ENCODE measurements at regions of chr9 and their contacts with region 1.

Region 1: GRCh38 chr9:121121582-121122087 is 46.9 kb downstream of the CNTRL start:
- DNase-seq: peak; percentile 87
- ATAC-seq: peak; percentile 100
- H3K4me3 ChIP-seq: peak overlapping the region; percentile 59
- H3K27ac ChIP-seq: peak overlapping the region; percentile 80
- H3K4me1 ChIP-seq: peaks cover 7% of the 10 kb centered on the region; the same call in 1 of the 2 replicates
- H3K27me3 ChIP-seq: no peaks in the 10 kb centered on the region
- CTCF ChIP-seq: peak in 1 of 3 experiments; percentile 15; a peak in 1 of 6 replicates
- EP300 ChIP-seq: no peak
- POLR2A ChIP-seq: peak; percentile 76
- RAD21 ChIP-seq: no peak; the same call in 1 of the 2 replicates

Region 2: GRCh38 chr9:121074635-121075385 is 46.8 kb before region 1 on chr9 and contains the start of gene CNTRL:
- CTCF ChIA-PET with region 1: interaction called, 5 read pairs
- POLR2A ChIA-PET with region 1: interaction called, 22 read pairs
- RAD21 ChIA-PET with region 1: interaction called, 18 read pairs
- SMC1A ChIA-PET with region 1: interaction called, 66 read pairs
- in situ Hi-C with region 1: no loop called
- intact Hi-C with region 1: loop called (anchors 5 kb)
- DNase-seq: peak; percentile 62
- ATAC-seq: peak; percentile 84
- H3K4me3 ChIP-seq: peak within 1 kb of the TSS; percentile 91
- H3K27ac ChIP-seq: peak within 1 kb of the TSS; percentile 98
- H3K4me1 ChIP-seq: peaks cover 29% of the 10 kb centered on the region
- H3K27me3 ChIP-seq: no peaks in the 10 kb centered on the region
- CTCF ChIP-seq: no peak
- EP300 ChIP-seq: no peak
- POLR2A ChIP-seq: peak; percentile 93
- RAD21 ChIP-seq: no peak
- polyA plus RNA-seq, gene CNTRL: 20.0 to 22.0 TPM

Region 3: GRCh38 chr9:121082075-121082474 is 39.6 kb before region 1 on chr9:
- CTCF ChIA-PET with region 1: interaction called, 4 read pairs
- POLR2A ChIA-PET with region 1: interaction called, 21 read pairs
- RAD21 ChIA-PET with region 1: interaction called, 18 read pairs
- SMC1A ChIA-PET with region 1: interaction called, 66 read pairs
- in situ Hi-C with region 1: no loop called
- intact Hi-C with region 1: no loop called
- DNase-seq: no peak
- ATAC-seq: peak; percentile 54
- H3K4me3 ChIP-seq: no peak overlapping the region
- H3K27ac ChIP-seq: no peak overlapping the region; the same call in 1 of the 2 replicates
- H3K4me1 ChIP-seq: no peaks in the 10 kb centered on the region
- H3K27me3 ChIP-seq: no peaks in the 10 kb centered on the region
- CTCF ChIP-seq: no peak
- EP300 ChIP-seq: no peak
- POLR2A ChIP-seq: no peak
- RAD21 ChIP-seq: no peak

Region 4: GRCh38 chr9:121107041-121107440 is 14.6 kb before region 1 on chr9:
- CTCF ChIA-PET with region 1: interaction called, 12 read pairs
- POLR2A ChIA-PET with region 1: interaction called, 16 read pairs
- RAD21 ChIA-PET with region 1: interaction called, 7 read pairs
- SMC1A ChIA-PET with region 1: interaction called, 21 read pairs
- in situ Hi-C with region 1: no loop called
- intact Hi-C with region 1: no loop called
- DNase-seq: no peak
- ATAC-seq: peak; percentile 79
- H3K4me3 ChIP-seq: no peak overlapping the region
- H3K27ac ChIP-seq: no peak overlapping the region
- H3K4me1 ChIP-seq: no peaks in the 10 kb centered on the region
- H3K27me3 ChIP-seq: no peaks in the 10 kb centered on the region
- CTCF ChIP-seq: peak in 2 of 3 experiments; percentile 16 to 30; a peak in 2 of 6 replicates
- EP300 ChIP-seq: no peak
- POLR2A ChIP-seq: no peak
- RAD21 ChIP-seq: peak; percentile 38; the same call in 1 of the 2 replicates

Region 5: DNA sequence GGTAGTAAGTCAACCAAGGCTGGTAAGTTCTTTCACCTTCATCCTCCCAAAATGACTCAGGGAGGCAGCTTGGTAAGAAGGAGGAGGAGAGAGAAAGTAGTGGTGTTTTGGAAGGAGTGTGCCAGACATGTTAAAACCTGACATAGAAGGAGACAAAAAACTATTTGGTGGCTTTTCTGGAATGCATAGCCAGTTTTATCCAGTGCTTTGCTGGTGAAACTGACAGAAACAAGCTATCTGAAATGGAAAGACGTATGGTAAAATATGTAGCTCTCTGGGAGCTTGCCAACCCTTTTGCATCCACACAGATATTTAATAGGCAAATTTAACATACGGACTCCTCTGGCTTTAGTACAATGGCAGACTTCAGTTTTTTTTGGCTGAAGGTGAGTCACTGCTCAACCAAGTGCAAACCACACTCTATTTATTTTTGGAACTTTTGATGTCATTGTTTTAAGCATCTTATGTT is 34.7 kb after region 1 on chr9:
- CTCF ChIA-PET with region 1: interaction called, 6 read pairs
- POLR2A ChIA-PET with region 1: interaction called, 8 read pairs
- RAD21 ChIA-PET with region 1: interaction called, 13 read pairs
- SMC1A ChIA-PET with region 1: interaction called, 19 read pairs
- in situ Hi-C with region 1: no loop called
- intact Hi-C with region 1: loop called (anchors 5 kb)
- DNase-seq: peak; percentile 72
- ATAC-seq: peak; percentile 95
- H3K4me3 ChIP-seq: peak overlapping the region; percentile 15; the same call in 1 of the 2 replicates
- H3K27ac ChIP-seq: peak overlapping the region; percentile 82
- H3K4me1 ChIP-seq: peaks cover 20% of the 10 kb centered on the region
- H3K27me3 ChIP-seq: no peaks in the 10 kb centered on the region
- CTCF ChIP-seq: no peak
- EP300 ChIP-seq: peak; percentile 9 to 57; a peak in 3 of 4 replicates
- POLR2A ChIP-seq: no peak
- RAD21 ChIP-seq: no peak

Region 6: GRCh38 chr9:121196389-121196788 is 74.8 kb after region 1 on chr9:
- CTCF ChIA-PET with region 1: interaction called, 6 read pairs
- POLR2A ChIA-PET with region 1: interaction called, 11 read pairs
- RAD21 ChIA-PET with region 1: interaction called, 15 read pairs
- SMC1A ChIA-PET with region 1: interaction called, 6 read pairs
- in situ Hi-C with region 1: no loop called
- intact Hi-C with region 1: loop called (anchors 5 kb)
- DNase-seq: no peak
- ATAC-seq: peak; percentile 62
- H3K4me3 ChIP-seq: 0 out of 2 replicates have a peak overlapping the region, but pooled peaks have one; percentile 38
- H3K27ac ChIP-seq: peak overlapping the region; percentile 47
- H3K4me1 ChIP-seq: peaks cover 8% of the 10 kb centered on the region
- H3K27me3 ChIP-seq: no peaks in the 10 kb centered on the region
- CTCF ChIP-seq: no peak
- EP300 ChIP-seq: no peak
- POLR2A ChIP-seq: no peak
- RAD21 ChIP-seq: no peak

Region 7: DNA sequence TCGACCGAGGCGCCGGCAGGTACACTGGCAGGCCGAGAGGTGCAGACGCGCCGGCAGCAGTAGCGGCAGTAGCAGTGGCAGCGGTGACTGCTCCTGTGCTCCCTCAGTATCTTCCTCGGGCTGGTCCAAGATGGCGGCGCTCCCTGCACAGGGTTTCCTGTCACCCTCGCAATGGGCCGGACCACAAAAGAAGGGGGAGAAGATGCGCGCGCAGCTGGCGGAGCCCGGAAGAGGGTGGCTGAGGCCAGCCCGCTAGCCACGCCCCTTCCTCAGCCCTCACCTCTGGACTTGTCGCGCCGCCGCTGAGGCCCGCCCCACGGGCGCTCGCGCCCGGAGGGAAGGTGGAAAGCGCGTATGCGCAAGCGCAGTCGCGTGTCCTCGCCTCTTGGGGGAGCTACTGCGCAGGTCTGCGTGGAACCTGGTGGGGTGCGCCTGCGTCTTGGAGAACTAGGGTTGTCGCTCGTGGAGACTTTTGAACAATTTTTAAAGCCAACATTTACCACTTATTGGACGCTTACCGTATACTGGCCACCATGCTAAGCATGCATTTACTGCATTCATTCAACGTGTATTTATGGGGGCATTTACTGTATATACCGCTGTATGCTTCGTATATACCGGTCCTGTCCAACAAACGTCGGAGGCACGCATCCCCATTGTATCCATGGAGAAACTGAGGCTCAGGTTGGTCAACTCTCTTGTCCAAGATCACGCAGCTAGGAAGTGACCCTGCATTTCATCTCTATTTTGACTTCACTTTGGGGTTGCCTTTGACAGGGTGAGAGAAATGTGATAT is 80.3 kb after region 1 on chr9 and contains the start of gene RAB14:
- CTCF ChIA-PET with region 1: interaction called, 6 read pairs
- POLR2A ChIA-PET with region 1: interaction called, 11 read pairs
- RAD21 ChIA-PET with region 1: interaction called, 15 read pairs
- SMC1A ChIA-PET with region 1: interaction called, 6 read pairs
- in situ Hi-C with region 1: no loop called
- intact Hi-C with region 1: no loop called
- DNase-seq: peak; percentile 96
- ATAC-seq: peak; percentile 85
- H3K4me3 ChIP-seq: peak within 1 kb of the TSS; percentile 90
- H3K27ac ChIP-seq: peak within 1 kb of the TSS; percentile 92
- H3K4me1 ChIP-seq: peaks cover 14% of the 10 kb centered on the region
- H3K27me3 ChIP-seq: no peaks in the 10 kb centered on the region
- CTCF ChIP-seq: peak; percentile 58 to 78 (median 69); a peak in 5 of 6 replicates
- EP300 ChIP-seq: no peak
- POLR2A ChIP-seq: peak; percentile 99
- RAD21 ChIP-seq: no peak
- polyA plus RNA-seq, gene RAB14: 21.3 to 26.0 TPM

Region 8: DNA sequence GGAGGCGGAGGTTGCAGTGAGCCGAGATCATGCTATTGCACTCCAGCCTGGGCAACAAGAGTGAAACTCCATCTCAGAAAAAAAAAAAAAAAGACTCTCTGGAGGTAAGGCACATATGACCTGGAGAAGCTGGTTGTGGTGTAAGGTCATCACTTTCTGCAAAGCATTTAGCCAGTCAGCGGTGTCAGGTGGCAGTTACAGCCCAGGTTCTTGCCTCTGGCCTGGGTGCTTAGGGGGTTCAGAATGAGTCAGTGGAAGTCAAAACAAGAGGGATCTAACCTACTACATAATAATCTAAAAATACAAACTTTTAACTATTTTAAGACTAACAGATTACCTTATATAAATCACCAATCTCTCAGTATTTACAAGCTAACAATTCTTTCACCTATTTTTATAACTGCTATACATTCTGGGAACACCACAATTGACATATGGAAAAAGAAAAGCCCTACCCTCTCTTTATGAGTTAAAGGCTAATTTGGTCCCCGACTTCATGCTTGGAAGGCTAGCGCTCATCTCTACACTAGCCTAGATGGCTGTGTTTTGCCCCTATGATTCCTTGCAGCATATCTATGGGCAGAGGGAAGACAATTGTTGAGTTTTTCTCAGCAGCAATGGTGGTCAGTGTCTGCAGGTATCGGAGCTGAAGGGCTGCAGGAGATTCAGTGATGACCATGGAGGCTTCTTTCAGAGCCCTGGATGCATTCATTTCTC is 219.2 kb after region 1 on chr9:
- CTCF ChIA-PET with region 1: no interaction called
- POLR2A ChIA-PET with region 1: no interaction called
- RAD21 ChIA-PET with region 1: no interaction called
- SMC1A ChIA-PET with region 1: no interaction called
- in situ Hi-C with region 1: no loop called
- intact Hi-C with region 1: no loop called
- DNase-seq: no peak
- ATAC-seq: peak; percentile 93
- H3K4me3 ChIP-seq: no peak overlapping the region
- H3K27ac ChIP-seq: no peak overlapping the region
- H3K4me1 ChIP-seq: peaks cover 3% of the 10 kb centered on the region; the same call in 1 of the 2 replicates
- H3K27me3 ChIP-seq: no peaks in the 10 kb centered on the region
- CTCF ChIP-seq: no peak
- EP300 ChIP-seq: no peak
- POLR2A ChIP-seq: no peak
- RAD21 ChIP-seq: no peak